ENCODE measurements at regions of chr3 and their contacts with region 1.

Region 1: GRCh38 chr3:3476669-3477068 is 297.2 kb upstream of the CRBN start:
- DNase-seq: no peak

Region 2: DNA sequence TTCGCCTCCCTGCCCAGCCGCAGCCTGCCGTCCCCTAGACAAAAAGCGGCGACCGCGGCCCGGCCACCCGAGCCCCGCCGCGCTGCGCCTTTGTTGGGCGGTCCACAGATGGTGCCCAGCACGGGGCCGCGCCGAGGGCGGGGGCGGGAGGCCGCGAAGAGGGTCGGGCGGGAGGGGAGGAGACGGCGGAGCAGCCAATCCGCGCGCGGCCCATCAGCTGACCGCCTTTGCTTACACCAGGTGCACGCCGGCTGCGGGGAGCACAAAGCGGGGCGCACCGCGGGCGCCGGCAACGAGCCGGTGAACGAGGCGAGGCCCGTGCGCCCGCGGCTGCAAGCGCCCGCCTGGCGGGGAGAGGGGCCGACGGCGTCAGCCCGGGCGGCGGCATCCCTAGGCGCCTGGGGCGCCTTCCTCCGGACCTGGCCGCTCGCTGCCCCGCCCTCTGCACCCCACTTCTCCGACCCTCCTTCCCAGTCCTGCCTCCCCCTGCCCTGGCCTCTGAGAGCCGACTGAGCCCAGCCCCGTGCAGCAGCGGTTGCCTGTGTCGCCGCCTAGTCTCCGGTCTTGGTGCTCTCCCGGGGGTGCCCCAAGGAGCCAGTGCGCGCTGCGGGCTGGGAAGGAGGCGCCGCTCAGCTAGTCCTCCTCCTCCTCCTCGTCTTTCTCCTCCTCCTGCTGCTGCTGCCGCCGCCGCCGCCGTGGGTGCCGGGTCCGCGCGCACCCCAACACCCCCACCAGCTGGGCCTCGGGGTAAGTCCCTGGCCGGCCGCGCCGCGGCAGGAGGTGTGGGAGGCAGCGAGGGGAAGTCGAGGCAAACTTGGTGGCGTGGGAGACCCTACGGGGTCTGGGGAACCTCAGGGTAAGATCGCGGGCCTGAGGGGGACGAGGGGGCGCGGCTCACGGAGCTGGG is 322.8 kb after region 1 on chr3 and contains the start of gene LRRN1:
- intact Hi-C with region 1: loop called in 1 of 2 experiments (anchors 5 kb)
- DNase-seq: peak; percentile 86
- total RNA-seq, gene LRRN1: 0.65 to 1.7 TPM

Measured in posterior vena cava (tissue), 2 donors.